Caco-2 (cell line): ENCODE measurements at regions of chr4 and their contacts with region 1.

Region 1: DNA sequence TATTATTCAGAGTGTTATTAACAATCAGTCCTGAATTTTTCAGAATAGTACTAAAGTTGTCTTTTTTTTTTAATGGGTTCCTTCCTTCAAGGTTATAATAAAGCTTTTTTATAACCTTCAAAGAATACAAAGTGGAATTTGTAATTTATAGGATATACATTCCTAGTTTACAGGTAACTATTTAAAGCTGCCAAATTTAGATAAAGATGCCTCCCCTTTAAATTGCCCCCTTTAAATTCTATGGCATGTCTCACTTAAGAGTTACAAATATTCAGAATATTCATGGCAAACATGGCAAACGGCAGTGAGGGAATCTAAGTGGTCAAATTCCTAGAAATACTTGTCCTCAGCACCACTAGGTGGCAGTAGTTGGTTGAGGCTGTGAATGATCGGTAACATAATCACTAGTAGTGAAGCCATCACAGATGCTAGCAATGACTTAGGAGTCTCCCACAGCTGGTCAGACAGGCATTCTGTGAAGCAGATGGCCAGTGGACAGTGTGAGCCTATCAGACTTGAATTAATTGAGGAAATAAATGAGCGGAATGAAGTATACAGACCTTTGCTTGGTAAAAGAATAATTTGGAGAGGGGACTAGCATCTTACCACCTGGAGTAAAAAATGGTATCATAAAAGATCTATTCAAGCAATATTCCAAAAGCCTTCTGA is 86.4 kb downstream of the CBR4 start:
- DNase-seq: peak; percentile 54 to 68
- H3K4me3 ChIP-seq: no peak overlapping the region
- H3K4me3 Mint-ChIP-seq: no peak overlapping the region
- H3K27ac Mint-ChIP-seq: no peak overlapping the region
- H3K4me1 ChIP-seq: no peaks in the 10 kb centered on the region
- H3K4me1 Mint-ChIP-seq: peaks cover 7% of the 10 kb centered on the region
- H3K27me3 ChIP-seq: no peaks in the 10 kb centered on the region
- H3K27me3 Mint-ChIP-seq: no peaks in the 10 kb centered on the region
- CTCF ChIP-seq: peak; percentile 37 to 66

Region 2: DNA sequence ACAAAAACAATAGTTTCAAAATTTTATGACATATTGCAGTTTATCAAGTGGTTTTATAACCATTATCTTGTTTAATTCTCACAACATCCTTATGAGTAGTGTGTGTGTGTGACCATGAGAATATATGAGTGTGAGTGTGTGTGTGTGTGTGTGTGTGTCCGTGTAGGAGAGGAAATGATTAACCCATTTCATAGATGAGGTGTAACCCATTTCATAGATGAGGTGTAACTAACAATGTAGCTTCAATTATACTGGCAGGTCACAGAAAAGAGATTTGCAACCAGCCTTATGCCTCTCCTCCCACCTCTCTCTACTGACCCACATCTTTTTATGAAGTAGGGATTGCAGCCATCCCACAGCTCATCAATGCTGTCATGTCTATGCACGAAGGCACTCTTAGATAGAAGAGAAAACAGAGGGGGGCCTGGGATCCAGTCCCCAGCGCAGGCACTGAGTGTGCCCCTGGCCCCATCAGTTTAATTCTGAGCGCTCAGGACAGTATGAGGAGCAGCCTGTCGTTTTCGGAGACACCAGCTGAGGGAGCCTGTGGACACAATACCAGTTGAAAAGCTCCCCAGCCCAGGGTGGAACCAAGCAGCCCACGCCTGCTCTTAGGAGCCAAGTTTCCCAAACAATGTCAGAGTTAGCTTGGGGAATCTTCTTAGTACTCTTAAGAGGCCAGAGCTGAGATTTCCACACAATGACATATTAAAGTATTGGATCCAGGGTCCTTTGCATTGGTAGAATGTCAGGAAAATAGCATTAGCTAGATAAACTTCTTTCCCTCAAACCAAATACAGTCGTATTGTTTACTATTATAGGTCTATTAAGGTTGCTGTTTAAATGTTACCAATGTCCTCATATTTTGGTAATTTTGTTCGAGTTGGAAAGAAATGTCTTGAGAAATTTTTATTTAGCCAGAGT is 338.2 kb before region 1 on chr4:
- CTCF ChIA-PET with region 1: interaction called, 13 read pairs
- POLR2A ChIA-PET with region 1: no interaction called
- intact Hi-C with region 1: loop called (anchors 1 kb)
- DNase-seq: peak; percentile 63 to 67
- H3K4me3 ChIP-seq: no peak overlapping the region
- H3K4me3 Mint-ChIP-seq: no peak overlapping the region
- H3K27ac Mint-ChIP-seq: no peak overlapping the region
- H3K4me1 ChIP-seq: no peaks in the 10 kb centered on the region
- H3K4me1 Mint-ChIP-seq: no peaks in the 10 kb centered on the region
- H3K27me3 ChIP-seq: no peaks in the 10 kb centered on the region
- H3K27me3 Mint-ChIP-seq: no peaks in the 10 kb centered on the region
- CTCF ChIP-seq: peak; percentile 52 to 62

Region 3: GRCh38 chr4:168710353-168710946 is 213.2 kb before region 1 on chr4:
- CTCF ChIA-PET with region 1: interaction called, 9 read pairs
- POLR2A ChIA-PET with region 1: no interaction called
- intact Hi-C with region 1: loop called (anchors 1 kb)
- DNase-seq: peak; percentile 30 to 36
- H3K4me3 ChIP-seq: no peak overlapping the region
- H3K4me3 Mint-ChIP-seq: no peak overlapping the region
- H3K27ac Mint-ChIP-seq: no peak overlapping the region
- H3K4me1 ChIP-seq: no peaks in the 10 kb centered on the region
- H3K4me1 Mint-ChIP-seq: no peaks in the 10 kb centered on the region
- H3K27me3 ChIP-seq: no peaks in the 10 kb centered on the region; the same call in 1 of the 2 replicates
- H3K27me3 Mint-ChIP-seq: peaks cover 3% of the 10 kb centered on the region
- CTCF ChIP-seq: peak; percentile 36 to 58

Region 4: DNA sequence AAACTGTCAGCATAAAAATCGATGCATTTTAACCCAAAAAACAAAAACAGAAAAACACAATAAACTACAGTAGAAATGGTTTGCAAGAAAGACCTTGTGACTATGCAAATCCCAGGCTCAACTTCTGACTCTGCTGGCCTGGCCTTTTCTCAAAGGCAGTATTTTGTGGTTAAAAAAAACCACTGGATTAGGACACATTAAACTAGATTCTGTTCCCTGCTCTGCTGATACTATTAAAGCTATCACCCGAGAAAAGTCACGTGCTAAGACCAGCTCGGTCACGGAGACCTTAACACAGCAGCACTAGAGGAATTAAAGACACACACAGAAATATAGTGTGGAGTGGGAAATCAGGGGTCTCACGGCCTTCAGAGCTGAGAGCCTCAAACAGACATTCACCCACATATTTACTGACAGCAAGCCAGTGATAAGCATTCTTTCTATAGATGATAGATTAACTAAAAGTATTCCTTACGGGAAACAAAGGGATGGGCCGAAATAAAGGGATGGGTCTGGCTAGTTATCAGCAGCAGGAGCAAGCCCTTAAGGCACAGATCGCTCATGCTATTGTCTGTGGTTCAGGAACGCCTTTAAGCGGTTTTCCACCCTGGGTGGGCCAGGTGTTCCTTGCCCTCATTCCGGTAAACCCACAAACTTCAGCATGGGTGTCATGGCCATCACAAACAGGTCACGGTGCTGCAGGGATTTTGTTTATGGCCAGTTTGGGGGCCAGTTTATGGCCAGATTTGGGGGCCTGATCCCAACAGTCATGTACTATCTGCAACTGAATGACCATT is 70.3 kb after region 1 on chr4:
- CTCF ChIA-PET with region 1: no interaction called
- POLR2A ChIA-PET with region 1: no interaction called
- intact Hi-C with region 1: loop called (anchors 1 kb)
- DNase-seq: no peak
- H3K4me3 ChIP-seq: no peak overlapping the region
- H3K4me3 Mint-ChIP-seq: no peak overlapping the region
- H3K27ac Mint-ChIP-seq: no peak overlapping the region
- H3K4me1 ChIP-seq: no peaks in the 10 kb centered on the region
- H3K4me1 Mint-ChIP-seq: no peaks in the 10 kb centered on the region
- H3K27me3 ChIP-seq: no peaks in the 10 kb centered on the region
- H3K27me3 Mint-ChIP-seq: no peaks in the 10 kb centered on the region
- CTCF ChIP-seq: no peak

Region 5: GRCh38 chr4:169485791-169486742 is 562.4 kb after region 1 on chr4:
- CTCF ChIA-PET with region 1: interaction called, 3 read pairs
- POLR2A ChIA-PET with region 1: no interaction called
- intact Hi-C with region 1: loop called (anchors 1 kb)
- DNase-seq: peak in 1 of 2 experiments; percentile 53
- H3K4me3 ChIP-seq: no peak overlapping the region
- H3K4me3 Mint-ChIP-seq: no peak overlapping the region
- H3K27ac Mint-ChIP-seq: no peak overlapping the region
- H3K4me1 ChIP-seq: 0 out of 2 replicates have a peak, but pooled peaks cover 4% of the 10 kb centered on the region
- H3K4me1 Mint-ChIP-seq: no peaks in the 10 kb centered on the region
- H3K27me3 ChIP-seq: no peaks in the 10 kb centered on the region
- H3K27me3 Mint-ChIP-seq: no peaks in the 10 kb centered on the region
- CTCF ChIP-seq: peak; percentile 34 to 42

Region 6: GRCh38 chr4:169566021-169566818 is 642.6 kb after region 1 on chr4:
- CTCF ChIA-PET with region 1: interaction called, 3 read pairs
- POLR2A ChIA-PET with region 1: no interaction called
- intact Hi-C with region 1: loop called (anchors 1 kb)
- DNase-seq: peak in 1 of 2 experiments; percentile 52
- H3K4me3 ChIP-seq: no peak overlapping the region
- H3K4me3 Mint-ChIP-seq: no peak overlapping the region
- H3K27ac Mint-ChIP-seq: no peak overlapping the region
- H3K4me1 ChIP-seq: no peaks in the 10 kb centered on the region
- H3K4me1 Mint-ChIP-seq: no peaks in the 10 kb centered on the region
- H3K27me3 ChIP-seq: no peaks in the 10 kb centered on the region
- H3K27me3 Mint-ChIP-seq: no peaks in the 10 kb centered on the region
- CTCF ChIP-seq: peak; percentile 56 to 63